Activated CD4-positive, alpha-beta T cell treated with anti-CD3 and anti-CD28 coated beads for 36 hours (primary cell): ENCODE measurements at regions of chr20 and their contacts with region 1.

Region 1: DNA sequence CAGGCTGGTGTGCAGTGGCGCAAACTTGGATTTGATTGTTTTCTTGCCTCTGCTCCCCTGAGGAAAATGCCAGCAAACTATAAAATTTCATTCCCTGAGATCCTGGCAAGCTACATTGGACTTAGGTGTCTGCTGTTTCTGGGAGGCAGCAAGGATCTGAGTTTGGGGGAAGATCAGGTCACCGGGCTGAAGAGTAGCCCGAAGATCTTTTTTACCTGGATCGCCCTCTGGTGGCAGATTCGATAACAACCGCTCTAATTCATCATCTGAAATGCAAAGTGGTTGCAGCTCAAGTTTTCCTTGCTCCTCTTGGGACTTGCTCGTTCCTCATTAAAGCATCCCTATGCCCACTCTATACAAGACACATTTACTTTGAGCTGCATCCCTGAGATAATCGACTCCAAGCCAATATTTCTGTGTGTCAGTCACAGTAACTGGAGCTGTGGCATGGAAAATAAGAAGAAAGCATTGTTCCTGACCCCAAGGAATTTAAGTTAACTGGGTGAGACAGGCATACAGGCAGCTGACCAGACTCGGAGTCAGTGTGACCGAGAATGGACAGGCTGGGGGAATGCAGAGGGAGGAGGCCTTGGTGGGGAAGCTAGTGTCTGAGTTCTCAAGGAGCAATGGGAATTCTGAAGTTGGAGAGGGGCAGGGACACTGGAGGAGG is 131.8 kb upstream of the PROKR2 start:
- DNase-seq: peak; percentile 73
- ATAC-seq: no peak
- H3K4me3 Mint-ChIP-seq: no peak overlapping the region
- H3K27ac Mint-ChIP-seq: no peak overlapping the region
- H3K4me1 Mint-ChIP-seq: no peaks in the 10 kb centered on the region
- H3K27me3 Mint-ChIP-seq: peaks cover 17% of the 10 kb centered on the region

Region 2: DNA sequence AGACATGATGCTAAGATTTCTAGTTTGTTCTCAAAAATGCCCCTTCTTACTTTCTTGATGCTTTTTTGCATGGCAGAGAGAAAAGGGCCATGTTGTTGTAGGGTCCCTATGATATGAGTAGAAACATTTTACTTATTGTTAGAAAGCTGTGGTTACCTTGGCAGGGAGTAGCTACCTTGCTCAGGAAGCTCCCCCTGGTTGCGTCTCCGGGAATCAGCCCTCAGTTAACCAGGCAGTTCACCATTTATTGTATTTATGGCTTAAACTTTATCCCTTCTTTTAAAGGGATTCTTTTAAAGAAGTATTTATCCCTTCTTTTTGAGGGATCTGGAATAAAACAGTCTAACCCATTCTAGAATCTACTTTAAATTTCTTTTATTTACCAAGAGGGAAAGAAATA is 17.9 kb before region 1 on chr20:
- CTCF ChIA-PET with region 1: interaction called, 11 read pairs
- POLR2A ChIA-PET with region 1: no interaction called
- intact Hi-C with region 1: no loop called
- DNase-seq: no peak
- ATAC-seq: no peak
- H3K4me3 Mint-ChIP-seq: no peak overlapping the region
- H3K27ac Mint-ChIP-seq: no peak overlapping the region
- H3K4me1 Mint-ChIP-seq: no peaks in the 10 kb centered on the region
- H3K27me3 Mint-ChIP-seq: peaks cover 11% of the 10 kb centered on the region